Keratinocyte (primary cell): ENCODE measurements at regions of chr10 and their contacts with region 1.

Region 1: DNA sequence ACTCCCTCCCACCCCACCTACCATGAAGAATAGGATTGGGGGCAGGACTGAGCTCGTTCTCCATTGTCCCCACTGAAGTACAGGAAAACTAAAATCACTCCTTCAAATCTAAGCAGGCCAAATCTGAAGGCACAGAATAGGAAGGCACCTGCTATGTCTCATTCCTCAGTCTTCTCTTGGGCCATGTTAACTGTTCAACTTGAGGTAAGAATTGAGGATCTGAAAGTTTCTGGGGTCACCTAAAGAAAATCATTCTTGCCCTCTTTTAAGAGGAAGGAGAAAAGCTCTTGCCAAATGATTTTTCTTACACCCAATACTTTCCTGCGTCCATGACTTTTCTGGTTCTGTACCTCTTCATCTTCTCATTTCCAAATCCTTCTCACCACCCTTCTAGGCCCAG is 4.9 kb downstream of the CPN1 start:
- DNase-seq: no peak
- H3K4me3 ChIP-seq: no peak overlapping the region
- H3K27ac ChIP-seq: no peak overlapping the region
- H3K4me1 ChIP-seq: no peaks in the 10 kb centered on the region
- H3K27me3 ChIP-seq: peaks cover 6% of the 10 kb centered on the region
- CTCF ChIP-seq: no peak

Region 2: GRCh38 chr10:100033766-100034418 is 42.9 kb before region 1 on chr10:
- dilution Hi-C with region 1: loop called (anchors 5 kb)
- DNase-seq: no peak
- H3K4me3 ChIP-seq: no peak overlapping the region
- H3K27ac ChIP-seq: no peak overlapping the region
- H3K4me1 ChIP-seq: peaks cover 9% of the 10 kb centered on the region
- H3K27me3 ChIP-seq: no peaks in the 10 kb centered on the region
- CTCF ChIP-seq: no peak